Endothelial cell of umbilical vein (primary cell): ENCODE measurements at regions of chr2 and their contacts with region 1.

Region 1: DNA sequence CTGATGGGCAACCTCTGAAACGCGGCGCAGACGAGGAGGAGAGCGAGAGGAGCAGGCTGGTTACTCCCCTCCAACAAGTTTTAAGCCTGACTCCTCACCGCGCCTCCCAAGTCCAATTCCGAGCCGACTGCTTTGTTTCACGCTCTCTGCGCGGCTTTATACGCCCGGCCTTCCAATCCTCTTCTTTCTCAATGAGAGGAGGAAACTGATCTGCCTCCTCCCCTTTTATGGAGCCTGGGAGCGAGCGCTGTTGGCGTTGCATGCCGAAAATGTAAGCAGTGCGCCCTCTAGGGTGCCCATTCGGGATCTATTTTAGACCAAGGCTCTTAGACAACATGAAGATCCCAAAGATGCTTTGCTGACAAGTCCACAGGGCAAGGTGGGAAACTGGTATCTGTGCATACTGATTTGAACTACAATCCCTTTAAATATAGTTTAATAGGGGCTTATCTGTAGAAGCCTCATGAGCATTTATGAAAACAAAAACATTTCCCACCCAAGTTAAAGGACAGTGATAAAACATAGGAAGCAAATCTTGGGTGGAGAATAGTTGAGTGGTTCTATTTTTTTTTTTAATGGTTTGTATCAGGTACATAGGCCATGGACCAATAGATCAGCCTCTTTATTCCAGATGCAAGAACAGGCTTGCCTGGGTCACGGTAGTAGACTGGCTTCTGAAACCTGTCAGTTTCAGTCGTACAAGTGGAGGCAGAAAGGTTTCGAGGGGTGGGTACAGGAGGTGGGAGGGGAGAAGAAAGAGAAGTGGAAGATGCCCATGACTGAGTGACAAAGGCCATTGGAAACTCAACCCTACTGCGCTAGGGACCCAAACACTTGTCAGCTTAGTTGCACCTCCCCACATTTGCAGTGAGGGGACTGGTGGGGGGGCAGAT is at the start of gene RND3:
- DNase-seq: peak; percentile 99
- H3K4me3 ChIP-seq: peak within 1 kb of the TSS; percentile 87 to 97 (median 95)
- H3K27ac ChIP-seq: peak within 1 kb of the TSS; percentile 85
- H3K4me1 ChIP-seq: peaks cover 32% of the 10 kb centered on the region
- H3K27me3 ChIP-seq: no peaks in the 10 kb centered on the region
- CTCF ChIP-seq: peak; percentile 81 to 90
- POLR2A ChIP-seq: peak; percentile 100
- total RNA-seq, gene RND3: 132 and 158 TPM in 2 replicates

Region 2: DNA sequence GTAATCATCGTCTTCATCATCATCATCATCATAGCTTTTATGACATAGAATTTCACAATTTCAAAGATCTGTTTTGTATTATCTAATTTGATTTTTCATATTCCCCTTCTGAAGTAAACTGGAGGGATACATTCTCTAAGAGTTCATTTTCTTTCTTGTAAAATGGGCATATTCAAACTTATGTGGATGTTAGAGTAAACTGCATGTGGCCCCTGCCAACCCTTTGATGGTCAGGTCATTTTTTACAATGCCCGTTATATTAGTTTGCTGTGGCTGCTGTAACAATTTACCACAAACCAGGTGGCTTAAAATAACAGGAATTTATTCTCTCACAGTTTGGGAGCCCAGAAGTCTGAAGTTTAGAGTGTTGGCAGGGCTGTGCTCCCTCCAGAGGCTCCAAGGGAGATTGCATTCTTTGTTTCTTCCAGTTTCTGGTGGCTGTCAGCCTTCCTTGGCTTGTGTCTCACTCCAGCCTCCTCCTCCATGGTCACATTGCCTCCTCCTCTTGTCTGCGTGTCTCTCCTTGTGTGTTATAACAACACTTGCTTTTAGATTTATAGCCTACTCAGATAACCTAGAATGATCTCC is 772.7 kb before region 1 on chr2:
- CTCF ChIA-PET with region 1: no interaction called
- POLR2A ChIA-PET with region 1: no interaction called
- dilution Hi-C with region 1: no loop called
- intact Hi-C with region 1: loop called (anchors 2 kb)
- DNase-seq: peak; percentile 63
- H3K4me3 ChIP-seq: no peak overlapping the region
- H3K27ac ChIP-seq: no peak overlapping the region
- H3K4me1 ChIP-seq: no peaks in the 10 kb centered on the region
- H3K27me3 ChIP-seq: no peaks in the 10 kb centered on the region
- CTCF ChIP-seq: peak; percentile 71 to 76
- POLR2A ChIP-seq: no peak

Region 3: DNA sequence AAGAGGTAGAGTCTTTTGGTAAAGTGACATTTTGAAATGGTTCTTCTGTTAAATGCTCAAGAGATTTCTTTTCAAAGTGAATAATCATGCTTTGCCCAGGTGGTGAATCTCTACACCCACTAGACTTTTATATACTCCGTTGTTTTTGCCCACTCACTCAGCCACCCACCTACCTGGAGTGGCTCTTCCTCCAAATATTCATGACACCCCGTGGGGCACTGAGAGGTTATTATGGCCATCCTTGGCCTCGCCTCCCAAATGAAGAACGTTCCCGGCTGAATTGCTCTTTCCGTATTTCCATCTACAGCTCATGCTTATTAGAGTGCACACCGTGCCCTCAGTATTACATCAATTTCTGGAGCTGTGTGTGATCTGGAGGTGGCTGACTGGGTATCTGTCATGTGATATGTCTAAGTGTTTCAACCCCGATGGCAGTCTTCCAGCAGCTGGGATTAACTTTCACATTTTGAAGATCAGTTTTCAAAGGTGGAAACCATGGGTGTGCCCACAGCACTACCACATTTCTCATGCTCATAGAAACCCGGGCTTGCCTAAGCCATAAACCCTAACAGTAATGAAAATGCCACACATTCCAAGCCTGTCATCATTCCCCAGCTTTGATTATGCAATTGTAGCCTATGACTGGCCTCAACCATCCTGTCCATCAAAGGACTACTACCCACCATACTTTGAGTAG is 493.6 kb before region 1 on chr2:
- CTCF ChIA-PET with region 1: no interaction called
- POLR2A ChIA-PET with region 1: no interaction called
- dilution Hi-C with region 1: no loop called
- intact Hi-C with region 1: loop called (anchors 10 kb)
- DNase-seq: no peak
- H3K4me3 ChIP-seq: no peak overlapping the region
- H3K27ac ChIP-seq: no peak overlapping the region
- H3K4me1 ChIP-seq: peaks cover 14% of the 10 kb centered on the region
- H3K27me3 ChIP-seq: no peaks in the 10 kb centered on the region
- CTCF ChIP-seq: no peak
- POLR2A ChIP-seq: no peak

Region 4: GRCh38 chr2:150143087-150143536 is 344.7 kb before region 1 on chr2:
- CTCF ChIA-PET with region 1: no interaction called
- POLR2A ChIA-PET with region 1: interaction called, 6 read pairs
- dilution Hi-C with region 1: loop called (anchors 25 kb)
- intact Hi-C with region 1: loop called (anchors 1 kb)
- DNase-seq: peak; percentile 85
- H3K4me3 ChIP-seq: no peak overlapping the region
- H3K27ac ChIP-seq: peak overlapping the region; percentile 99
- H3K4me1 ChIP-seq: peaks cover 48% of the 10 kb centered on the region
- H3K27me3 ChIP-seq: no peaks in the 10 kb centered on the region
- CTCF ChIP-seq: no peak
- POLR2A ChIP-seq: no peak

Region 5: DNA sequence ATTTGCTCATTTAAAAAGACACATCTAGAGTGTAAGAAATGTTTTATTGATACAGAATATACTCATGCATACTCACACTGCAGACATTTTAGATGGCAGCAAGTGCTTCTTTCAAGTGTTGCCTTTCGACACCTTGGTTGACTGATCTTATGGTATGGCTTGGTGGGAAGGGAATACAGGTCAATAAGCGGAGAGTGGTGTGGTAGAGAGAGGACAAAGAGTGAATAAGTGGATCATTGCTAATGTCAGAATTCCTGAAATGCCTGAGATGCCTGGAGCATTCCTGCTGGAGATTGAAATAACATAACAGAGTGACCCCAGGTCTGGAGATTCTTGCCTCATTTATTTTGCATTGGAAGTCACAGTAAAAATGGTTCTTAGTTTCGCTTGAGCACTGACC is 77.0 kb before region 1 on chr2:
- CTCF ChIA-PET with region 1: no interaction called
- POLR2A ChIA-PET with region 1: interaction called, 7 read pairs
- dilution Hi-C with region 1: no loop called
- intact Hi-C with region 1: loop called (anchors 2 kb)
- DNase-seq: peak; percentile 85
- H3K4me3 ChIP-seq: no peak overlapping the region
- H3K27ac ChIP-seq: peak overlapping the region; percentile 95
- H3K4me1 ChIP-seq: peaks cover 40% of the 10 kb centered on the region
- H3K27me3 ChIP-seq: no peaks in the 10 kb centered on the region
- CTCF ChIP-seq: no peak
- POLR2A ChIP-seq: peak; percentile 39

Region 6: DNA sequence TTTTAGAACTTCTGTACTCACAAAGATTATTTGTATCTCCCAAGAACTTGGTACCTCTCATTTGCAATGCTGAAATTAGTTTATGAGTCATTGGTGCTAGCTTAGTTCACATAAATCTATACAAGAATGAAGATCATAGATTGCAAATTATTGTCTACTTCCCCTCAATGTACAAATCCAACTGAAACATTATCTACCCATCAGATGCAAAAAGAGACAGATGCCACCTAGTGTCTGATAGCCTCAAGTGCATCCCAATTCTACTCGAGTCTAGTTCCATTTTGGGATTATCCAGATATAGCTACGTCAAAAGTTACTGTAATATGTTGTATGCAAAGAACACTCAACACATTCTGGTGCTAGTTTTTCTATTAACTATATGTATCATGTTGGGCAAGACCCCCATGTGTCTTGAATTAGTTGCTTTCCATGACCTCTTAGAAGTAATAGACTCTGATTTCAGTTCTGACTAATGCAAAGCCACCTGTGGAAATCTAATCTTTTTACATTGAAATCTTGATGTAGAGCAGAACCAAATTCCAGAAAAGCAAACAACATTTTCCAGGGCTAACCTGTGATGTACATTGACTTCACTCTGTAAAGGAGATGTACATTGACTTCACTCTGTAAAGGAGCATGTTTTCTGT is 563.9 kb after region 1 on chr2:
- CTCF ChIA-PET with region 1: interaction called, 10 read pairs
- POLR2A ChIA-PET with region 1: interaction called, 4 read pairs
- dilution Hi-C with region 1: no loop called
- intact Hi-C with region 1: loop called (anchors 1 kb)
- DNase-seq: peak; percentile 69
- H3K4me3 ChIP-seq: no peak overlapping the region
- H3K27ac ChIP-seq: no peak overlapping the region
- H3K4me1 ChIP-seq: no peaks in the 10 kb centered on the region
- H3K27me3 ChIP-seq: no peaks in the 10 kb centered on the region
- CTCF ChIP-seq: peak; percentile 62 to 73
- POLR2A ChIP-seq: no peak